ENCODE measurements at regions of chr1 and their contacts with region 1.

Region 1: GRCh38 chr1:155466996-155467395 is 95.6 kb downstream of the ASH1L start:
- DNase-seq: no peak
- ATAC-seq: peak; percentile 33
- H3K4me3 ChIP-seq: no peak overlapping the region
- H3K27ac ChIP-seq: no peak overlapping the region
- H3K4me1 ChIP-seq: peaks cover 0 to 9% of the 10 kb centered on the region in 2 donors
- H3K27me3 ChIP-seq: no peaks in the 10 kb centered on the region
- CTCF ChIP-seq: no peak

Region 2: GRCh38 chr1:155320661-155321617 is 146.1 kb before region 1 on chr1 and contains the start of gene RUSC1:
- intact Hi-C with region 1: no loop called
- DNase-seq: peak; percentile 67 to 93 (median 82)
- ATAC-seq: peak; percentile 8
- H3K4me3 ChIP-seq: peak within 1 kb of the TSS; percentile 36 to 68
- H3K27ac ChIP-seq: peak within 1 kb of the TSS; percentile 3 to 97
- H3K4me1 ChIP-seq: peaks cover 11 to 57% of the 10 kb centered on the region in 2 donors
- H3K27me3 ChIP-seq: no peaks in the 10 kb centered on the region
- CTCF ChIP-seq: no peak
- polyA plus RNA-seq, gene RUSC1: 32.7 to 43.3 (median 36.7) TPM

Region 3: DNA sequence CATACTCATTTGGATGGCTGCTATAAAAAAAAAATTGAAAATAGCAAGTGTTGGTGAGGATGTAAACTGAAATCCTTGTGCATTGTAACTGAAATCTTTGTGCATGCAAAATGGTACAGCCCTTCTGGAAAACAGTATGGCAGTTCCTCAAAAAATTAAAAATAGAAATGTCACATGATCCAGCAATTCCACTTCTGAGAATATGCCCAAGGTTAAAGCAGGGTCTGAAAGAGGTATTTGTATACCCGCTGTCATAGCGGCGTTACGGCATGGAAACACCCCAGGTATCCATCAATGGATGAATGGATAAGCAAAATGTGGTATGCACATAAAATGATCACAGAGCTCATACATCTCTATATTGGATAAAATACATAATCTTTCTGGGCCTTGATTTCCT is 29.6 kb before region 1 on chr1:
- intact Hi-C with region 1: no loop called
- DNase-seq: no peak
- ATAC-seq: no peak
- H3K4me3 ChIP-seq: no peak overlapping the region
- H3K27ac ChIP-seq: no peak overlapping the region
- H3K4me1 ChIP-seq: no peaks in the 10 kb centered on the region
- H3K27me3 ChIP-seq: no peaks in the 10 kb centered on the region
- CTCF ChIP-seq: no peak

Region 4: GRCh38 chr1:155513300-155513916 is 46.4 kb after region 1 on chr1:
- intact Hi-C with region 1: loop called in 1 of 2 experiments (anchors 10 kb)
- DNase-seq: no peak
- ATAC-seq: peak; percentile 33
- H3K4me3 ChIP-seq: no peak overlapping the region
- H3K27ac ChIP-seq: no peak overlapping the region
- H3K4me1 ChIP-seq: peaks cover 0 to 15% of the 10 kb centered on the region in 2 donors
- H3K27me3 ChIP-seq: no peaks in the 10 kb centered on the region
- CTCF ChIP-seq: no peak

Region 5: DNA sequence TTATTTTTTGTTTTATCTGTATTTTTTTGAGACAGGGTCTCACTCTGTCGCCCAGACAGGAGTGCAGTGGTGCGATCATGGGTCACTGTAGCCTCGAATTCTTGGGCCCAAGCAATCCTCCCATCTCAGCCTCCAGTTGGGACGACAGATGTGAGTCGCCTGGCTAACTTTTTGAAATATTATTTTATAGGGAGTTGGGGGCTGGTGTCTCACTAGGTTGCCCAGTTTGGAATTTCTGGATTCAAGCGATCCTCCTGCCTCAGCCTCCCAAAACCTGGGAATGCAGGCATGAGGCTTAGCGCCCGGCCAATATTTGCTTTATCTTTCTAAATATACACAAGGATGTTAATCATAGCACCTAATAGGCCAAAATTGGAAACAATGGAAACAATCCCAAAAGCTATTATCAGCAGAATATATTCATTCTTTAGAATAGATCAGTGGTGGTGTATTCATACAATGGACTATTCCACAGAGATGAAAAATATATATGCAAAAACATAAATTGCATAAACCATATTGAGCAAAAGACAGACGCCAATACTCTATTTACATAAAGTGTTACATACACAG is 277.8 kb after region 1 on chr1:
- intact Hi-C with region 1: no loop called
- DNase-seq: no peak
- ATAC-seq: no peak
- H3K4me3 ChIP-seq: peak overlapping the region; percentile 53 to 58
- H3K27ac ChIP-seq: peak overlapping the region; percentile 65 to 73
- H3K4me1 ChIP-seq: peaks cover 0 to 8% of the 10 kb centered on the region in 2 donors
- H3K27me3 ChIP-seq: no peaks in the 10 kb centered on the region
- CTCF ChIP-seq: no peak